ENCODE measurements at regions of chr12 and their contacts with region 1.

Region 1: DNA sequence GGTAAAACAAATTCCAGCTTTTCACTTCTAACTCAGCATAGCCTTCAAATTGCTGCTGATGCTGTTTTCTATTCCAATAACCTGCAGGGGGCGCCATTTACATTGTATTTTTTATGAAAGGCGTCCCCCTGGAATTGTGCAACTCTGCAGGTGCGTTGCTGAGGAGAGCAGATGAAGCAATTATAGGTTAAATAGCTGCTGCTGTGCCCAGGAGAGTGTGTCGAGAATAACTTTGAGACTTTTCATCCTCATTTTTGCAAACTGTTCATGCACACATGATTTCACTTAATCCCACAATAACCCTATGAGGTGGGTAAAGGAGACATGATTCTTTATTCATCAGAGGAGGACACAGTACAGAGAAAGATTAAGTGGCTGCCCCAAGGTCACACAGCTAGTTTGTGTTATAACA is 75.7 kb downstream of the MYRFL start:
- DNase-seq: peak; percentile 18 to 77 (median 62)
- ATAC-seq: no peak
- H3K4me3 ChIP-seq: no peak overlapping the region
- H3K4me3 Mint-ChIP-seq: no peak overlapping the region
- H3K27ac ChIP-seq: no peak overlapping the region
- H3K27ac Mint-ChIP-seq: no peak overlapping the region
- H3K4me1 ChIP-seq: no peaks in the 10 kb centered on the region
- H3K4me1 Mint-ChIP-seq: no peaks in the 10 kb centered on the region
- H3K27me3 ChIP-seq: no peaks in the 10 kb centered on the region
- H3K27me3 Mint-ChIP-seq: peaks cover 3% of the 10 kb centered on the region
- CTCF ChIP-seq: peak; percentile 91

Region 2: DNA sequence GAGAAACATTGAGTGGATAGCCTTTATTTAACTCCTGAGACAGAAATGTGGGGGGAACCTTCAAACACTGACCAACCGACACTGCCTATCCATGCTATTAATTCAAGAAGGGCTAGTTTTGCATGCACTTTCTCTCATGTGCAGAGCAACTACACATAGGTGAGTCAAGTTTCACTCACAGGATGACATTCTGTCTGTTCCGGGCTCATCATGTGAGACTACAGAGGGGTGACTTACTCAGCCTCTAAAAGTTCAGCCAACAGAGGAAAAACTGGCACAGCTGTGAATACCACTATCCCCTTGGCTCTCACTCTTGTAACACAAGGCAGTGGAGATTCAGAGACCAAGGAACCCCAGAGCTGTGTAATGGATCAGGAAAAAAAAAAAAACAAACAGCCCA is 214.9 kb before region 1 on chr12:
- CTCF ChIA-PET with region 1: no interaction called
- POLR2A ChIA-PET with region 1: no interaction called
- intact Hi-C with region 1: no loop called
- DNase-seq: no peak
- ATAC-seq: no peak
- H3K4me3 ChIP-seq: no peak overlapping the region
- H3K4me3 Mint-ChIP-seq: no peak overlapping the region
- H3K27ac ChIP-seq: no peak overlapping the region
- H3K27ac Mint-ChIP-seq: no peak overlapping the region
- H3K4me1 ChIP-seq: no peaks in the 10 kb centered on the region
- H3K4me1 Mint-ChIP-seq: no peaks in the 10 kb centered on the region
- H3K27me3 ChIP-seq: no peaks in the 10 kb centered on the region
- H3K27me3 Mint-ChIP-seq: peaks cover 15% of the 10 kb centered on the region
- CTCF ChIP-seq: no peak

Region 3: DNA sequence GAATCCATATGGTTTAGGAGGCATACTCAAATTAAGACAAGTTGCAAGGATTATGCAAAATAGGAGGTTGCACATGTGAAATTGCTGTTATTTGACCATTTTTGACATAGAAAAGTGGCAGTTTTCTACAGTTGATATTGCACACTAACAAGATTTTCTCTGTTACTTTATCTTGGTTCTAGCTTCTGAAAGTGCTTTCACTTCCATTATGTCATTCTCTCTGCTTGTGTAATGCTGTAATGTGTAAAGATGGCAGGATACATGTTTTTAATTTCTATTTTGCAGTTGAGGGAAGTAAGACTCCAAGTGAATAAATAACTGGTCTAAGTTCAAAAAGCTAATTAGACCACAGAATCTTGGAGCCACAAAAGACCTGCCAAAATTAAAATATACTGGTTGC is 15.1 kb before region 1 on chr12:
- CTCF ChIA-PET with region 1: interaction called, 22 read pairs
- POLR2A ChIA-PET with region 1: no interaction called
- intact Hi-C with region 1: no loop called
- DNase-seq: no peak
- ATAC-seq: no peak
- H3K4me3 ChIP-seq: no peak overlapping the region
- H3K4me3 Mint-ChIP-seq: no peak overlapping the region
- H3K27ac ChIP-seq: no peak overlapping the region
- H3K27ac Mint-ChIP-seq: no peak overlapping the region
- H3K4me1 ChIP-seq: no peaks in the 10 kb centered on the region
- H3K4me1 Mint-ChIP-seq: no peaks in the 10 kb centered on the region
- H3K27me3 ChIP-seq: no peaks in the 10 kb centered on the region
- H3K27me3 Mint-ChIP-seq: peaks cover 7% of the 10 kb centered on the region
- CTCF ChIP-seq: no peak

Region 4: DNA sequence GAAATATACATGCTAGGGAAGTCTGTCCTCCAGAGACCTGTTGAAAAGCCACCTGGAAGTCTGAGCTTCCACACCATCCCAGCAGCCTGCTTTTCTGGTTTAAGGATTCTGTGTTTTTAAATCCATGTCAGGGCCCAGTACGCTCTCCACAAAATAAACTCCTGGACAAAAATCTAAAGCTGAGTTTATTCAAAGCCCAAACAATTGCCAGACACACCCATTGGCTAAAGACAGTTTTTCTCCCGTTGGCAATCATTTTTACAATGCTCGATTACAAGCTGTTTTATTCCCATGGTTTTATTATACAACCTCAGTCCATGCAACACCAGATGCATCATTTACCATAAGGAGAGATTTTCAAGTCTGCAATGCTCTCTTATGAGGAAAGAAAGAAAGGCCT is 18.8 kb after region 1 on chr12:
- CTCF ChIA-PET with region 1: interaction called, 13 read pairs
- POLR2A ChIA-PET with region 1: no interaction called
- intact Hi-C with region 1: no loop called
- DNase-seq: no peak
- ATAC-seq: no peak
- H3K4me3 ChIP-seq: no peak overlapping the region
- H3K4me3 Mint-ChIP-seq: no peak overlapping the region
- H3K27ac ChIP-seq: no peak overlapping the region
- H3K27ac Mint-ChIP-seq: no peak overlapping the region
- H3K4me1 ChIP-seq: no peaks in the 10 kb centered on the region
- H3K4me1 Mint-ChIP-seq: no peaks in the 10 kb centered on the region
- H3K27me3 ChIP-seq: no peaks in the 10 kb centered on the region
- H3K27me3 Mint-ChIP-seq: peaks cover 4% of the 10 kb centered on the region
- CTCF ChIP-seq: no peak

Region 5: DNA sequence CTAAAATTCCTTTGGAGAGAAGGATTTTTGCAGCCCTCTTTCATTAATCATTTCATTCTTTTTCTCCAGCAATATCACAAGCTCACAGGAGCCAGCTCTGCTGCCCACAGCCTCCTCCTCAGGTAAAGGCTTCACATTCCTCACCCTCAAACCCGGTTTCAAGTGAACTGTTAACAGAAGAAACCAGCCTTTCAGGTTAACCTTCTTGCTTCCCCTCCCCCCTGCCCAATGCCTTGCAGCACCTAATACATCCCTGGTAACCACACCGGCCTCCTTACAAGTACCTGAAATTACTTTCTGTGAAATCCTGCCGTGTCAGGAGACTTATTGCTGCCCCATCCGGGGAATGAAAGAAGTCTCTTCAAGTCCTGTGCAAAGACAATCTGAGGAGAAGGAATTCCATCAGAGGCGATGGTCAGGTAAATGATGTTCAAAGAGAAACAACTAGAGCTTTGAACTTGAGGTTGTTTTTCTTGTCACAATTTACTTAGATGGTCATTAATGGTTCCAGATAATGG is 35.5 kb after region 1 on chr12:
- CTCF ChIA-PET with region 1: no interaction called
- POLR2A ChIA-PET with region 1: no interaction called
- intact Hi-C with region 1: no loop called
- DNase-seq: no peak
- ATAC-seq: no peak
- H3K4me3 ChIP-seq: no peak overlapping the region
- H3K4me3 Mint-ChIP-seq: no peak overlapping the region
- H3K27ac ChIP-seq: no peak overlapping the region
- H3K27ac Mint-ChIP-seq: no peak overlapping the region
- H3K4me1 ChIP-seq: no peaks in the 10 kb centered on the region
- H3K4me1 Mint-ChIP-seq: no peaks in the 10 kb centered on the region
- H3K27me3 ChIP-seq: no peaks in the 10 kb centered on the region
- H3K27me3 Mint-ChIP-seq: peaks cover 12% of the 10 kb centered on the region
- CTCF ChIP-seq: no peak

Region 6: DNA sequence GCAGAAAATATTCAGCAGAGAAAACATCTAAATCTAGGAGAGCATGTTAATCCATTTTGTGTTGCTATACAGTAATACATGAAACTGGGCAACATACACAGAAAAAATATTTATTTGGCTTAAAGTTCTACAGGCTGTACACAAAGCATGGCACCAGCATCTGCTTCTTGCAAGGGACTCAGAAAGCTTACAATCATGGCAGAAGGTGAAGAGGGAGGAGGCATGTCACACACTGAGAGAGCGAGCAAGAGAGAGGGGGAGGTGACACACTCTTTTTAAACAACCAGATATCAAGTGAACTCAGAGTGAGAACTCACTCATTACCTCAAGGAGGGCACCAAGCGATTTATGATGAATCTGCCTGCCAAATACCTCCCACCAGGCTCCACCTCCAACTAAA is 248.3 kb after region 1 on chr12:
- CTCF ChIA-PET with region 1: no interaction called
- POLR2A ChIA-PET with region 1: no interaction called
- intact Hi-C with region 1: no loop called
- DNase-seq: no peak
- ATAC-seq: no peak
- H3K4me3 ChIP-seq: no peak overlapping the region
- H3K4me3 Mint-ChIP-seq: no peak overlapping the region
- H3K27ac ChIP-seq: no peak overlapping the region
- H3K27ac Mint-ChIP-seq: no peak overlapping the region
- H3K4me1 ChIP-seq: no peaks in the 10 kb centered on the region
- H3K4me1 Mint-ChIP-seq: no peaks in the 10 kb centered on the region
- H3K27me3 ChIP-seq: no peaks in the 10 kb centered on the region
- H3K27me3 Mint-ChIP-seq: no peaks in the 10 kb centered on the region
- CTCF ChIP-seq: no peak

Region 7: GRCh38 chr12:70576346-70577282 is 675.9 kb after region 1 on chr12:
- CTCF ChIA-PET with region 1: interaction called, 88 read pairs
- POLR2A ChIA-PET with region 1: no interaction called
- intact Hi-C with region 1: loop called (anchors 1 kb)
- DNase-seq: peak in 2 of 9 experiments; percentile 48 to 61
- ATAC-seq: no peak
- H3K4me3 ChIP-seq: no peak overlapping the region
- H3K4me3 Mint-ChIP-seq: no peak overlapping the region
- H3K27ac ChIP-seq: no peak overlapping the region
- H3K27ac Mint-ChIP-seq: no peak overlapping the region
- H3K4me1 ChIP-seq: no peaks in the 10 kb centered on the region
- H3K4me1 Mint-ChIP-seq: no peaks in the 10 kb centered on the region
- H3K27me3 ChIP-seq: no peaks in the 10 kb centered on the region
- H3K27me3 Mint-ChIP-seq: peaks cover 6% of the 10 kb centered on the region
- CTCF ChIP-seq: peak; percentile 70

Region 8: GRCh38 chr12:70719672-70720420 is 819.1 kb after region 1 on chr12:
- CTCF ChIA-PET with region 1: interaction called, 5 read pairs
- POLR2A ChIA-PET with region 1: no interaction called
- intact Hi-C with region 1: loop called in 1 of 2 experiments (anchors 1 kb)
- DNase-seq: peak in 7 of 9 experiments; percentile 2 to 53 (median 29)
- ATAC-seq: peak; percentile 48
- H3K4me3 ChIP-seq: no peak overlapping the region
- H3K4me3 Mint-ChIP-seq: peak overlapping the region; percentile 51
- H3K27ac ChIP-seq: no peak overlapping the region
- H3K27ac Mint-ChIP-seq: no peak overlapping the region
- H3K4me1 ChIP-seq: peaks cover 4% of the 10 kb centered on the region
- H3K4me1 Mint-ChIP-seq: peaks cover 9% of the 10 kb centered on the region
- H3K27me3 ChIP-seq: no peaks in the 10 kb centered on the region
- H3K27me3 Mint-ChIP-seq: peaks cover 12% of the 10 kb centered on the region
- CTCF ChIP-seq: peak; percentile 74

Region 9: DNA sequence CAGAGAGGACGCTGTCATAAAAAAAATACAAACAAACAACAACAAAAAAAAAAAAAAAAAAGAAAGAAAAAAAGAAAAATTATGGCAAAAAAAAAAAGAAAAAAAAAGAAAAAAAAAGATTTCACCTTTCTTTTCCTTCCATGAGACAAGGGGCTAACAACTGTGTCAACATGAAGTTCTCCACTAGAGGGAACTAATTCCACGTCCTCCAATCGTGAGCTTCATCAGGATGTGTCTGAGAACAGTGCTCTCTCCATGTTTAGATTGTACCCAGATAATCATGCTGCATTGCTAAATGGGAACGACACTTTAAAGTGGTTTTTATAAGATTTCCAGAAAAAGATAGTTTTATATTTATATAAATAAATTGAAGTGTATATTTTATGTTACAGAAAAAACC is 832.7 kb after region 1 on chr12:
- CTCF ChIA-PET with region 1: interaction called, 17 read pairs
- POLR2A ChIA-PET with region 1: no interaction called
- intact Hi-C with region 1: loop called (anchors 1 to 2 kb)
- DNase-seq: peak in 2 of 9 experiments; percentile 19 to 52
- ATAC-seq: no peak
- H3K4me3 ChIP-seq: no peak overlapping the region
- H3K4me3 Mint-ChIP-seq: no peak overlapping the region
- H3K27ac ChIP-seq: no peak overlapping the region
- H3K27ac Mint-ChIP-seq: no peak overlapping the region
- H3K4me1 ChIP-seq: no peaks in the 10 kb centered on the region
- H3K4me1 Mint-ChIP-seq: no peaks in the 10 kb centered on the region
- H3K27me3 ChIP-seq: peaks cover 0 to 3% of the 10 kb centered on the region in 2 experiments
- H3K27me3 Mint-ChIP-seq: peaks cover 2% of the 10 kb centered on the region
- CTCF ChIP-seq: peak; percentile 31

Measured in CD8-positive, alpha-beta T cell (primary cell).